PC-9 (cell line): ENCODE measurements at regions of chr5 and their contacts with region 1.

Region 1: GRCh38 chr5:39119404-39120051 is 45.3 kb upstream of the RICTOR start:
- DNase-seq: no peak
- H3K4me3 ChIP-seq: no peak overlapping the region
- H3K27ac ChIP-seq: no peak overlapping the region
- H3K4me1 ChIP-seq: 0 out of 2 replicates have a peak, but pooled peaks cover 16% of the 10 kb centered on the region
- H3K27me3 ChIP-seq: no peaks in the 10 kb centered on the region
- CTCF ChIP-seq: no peak

Region 2: DNA sequence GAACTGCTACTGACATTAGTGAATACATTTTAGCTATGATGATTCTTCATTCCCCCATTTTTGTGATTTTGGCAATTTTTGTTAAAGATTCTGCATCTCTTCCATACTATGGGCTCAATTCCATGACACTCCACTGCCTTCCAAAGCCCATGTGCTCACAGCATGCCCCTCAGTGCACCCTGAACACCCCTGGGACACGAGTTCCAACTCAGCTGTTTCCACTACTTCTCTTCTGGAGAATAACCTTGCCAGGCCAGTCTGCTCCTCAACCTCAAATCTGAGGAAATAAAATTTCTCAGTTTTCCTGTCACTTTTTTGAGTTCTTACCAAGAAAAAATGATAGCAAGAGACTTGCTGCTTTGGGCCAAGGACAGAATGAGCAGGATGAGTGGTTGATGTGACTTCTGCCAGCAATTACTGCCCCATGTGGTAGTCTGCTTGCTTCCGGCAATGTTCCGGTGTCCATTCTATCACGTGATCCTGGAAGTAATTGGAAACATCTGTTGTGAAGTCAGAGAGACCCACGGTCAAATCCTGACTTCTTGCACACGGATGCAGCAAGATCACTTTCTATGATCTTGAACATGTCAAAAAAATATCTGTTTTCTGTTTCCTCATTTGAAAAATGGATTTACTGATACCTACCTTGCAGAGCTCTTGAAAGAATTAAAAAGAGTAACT is 802.8 kb before region 1 on chr5:
- CTCF ChIA-PET with region 1: no interaction called
- POLR2A ChIA-PET with region 1: no interaction called
- intact Hi-C with region 1: no loop called
- DNase-seq: no peak
- H3K4me3 ChIP-seq: no peak overlapping the region
- H3K27ac ChIP-seq: no peak overlapping the region
- H3K4me1 ChIP-seq: no peaks in the 10 kb centered on the region
- H3K27me3 ChIP-seq: peaks cover 27% of the 10 kb centered on the region
- CTCF ChIP-seq: no peak

Region 3: GRCh38 chr5:38899936-38900335 is 219.6 kb before region 1 on chr5:
- CTCF ChIA-PET with region 1: no interaction called
- POLR2A ChIA-PET with region 1: interaction called, 10 read pairs
- intact Hi-C with region 1: no loop called
- DNase-seq: no peak
- H3K4me3 ChIP-seq: no peak overlapping the region
- H3K27ac ChIP-seq: no peak overlapping the region
- H3K4me1 ChIP-seq: no peaks in the 10 kb centered on the region
- H3K27me3 ChIP-seq: no peaks in the 10 kb centered on the region
- CTCF ChIP-seq: no peak

Region 4: DNA sequence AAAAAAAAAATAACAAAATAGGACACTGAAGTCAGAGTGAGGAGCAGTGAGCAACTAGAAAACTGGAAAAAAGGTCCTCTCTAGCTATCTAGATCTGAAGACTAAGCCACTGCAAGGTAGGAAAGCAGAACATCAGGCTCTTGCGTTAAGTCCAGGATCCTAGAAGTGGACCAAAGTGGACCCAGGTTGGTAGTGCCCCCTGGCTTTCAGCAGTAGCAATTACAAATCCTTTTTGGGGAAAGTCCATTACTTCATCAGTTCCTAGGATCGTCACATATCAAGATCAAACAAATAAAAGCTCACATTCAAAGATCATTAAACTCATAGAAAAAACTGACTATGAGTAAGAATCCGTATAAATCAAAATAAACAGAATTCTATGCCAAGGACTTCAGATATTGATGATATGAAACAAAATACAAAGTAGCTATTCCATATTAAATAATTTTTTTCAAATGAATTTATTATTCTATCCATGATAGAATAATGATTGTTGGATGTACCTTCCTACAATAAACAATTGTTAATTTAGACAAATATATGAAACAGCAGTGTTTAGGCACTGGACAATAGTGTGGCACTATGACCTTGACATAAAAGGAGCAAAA is 38.8 kb before region 1 on chr5:
- CTCF ChIA-PET with region 1: interaction called, 13 read pairs
- POLR2A ChIA-PET with region 1: interaction called, 28 read pairs
- intact Hi-C with region 1: no loop called
- DNase-seq: no peak
- H3K4me3 ChIP-seq: no peak overlapping the region
- H3K27ac ChIP-seq: no peak overlapping the region
- H3K4me1 ChIP-seq: peaks cover 21% of the 10 kb centered on the region
- H3K27me3 ChIP-seq: no peaks in the 10 kb centered on the region
- CTCF ChIP-seq: peak; percentile 76

Region 5: GRCh38 chr5:39138892-39139291 is 19.4 kb after region 1 on chr5:
- CTCF ChIA-PET with region 1: no interaction called
- POLR2A ChIA-PET with region 1: no interaction called
- intact Hi-C with region 1: loop called (anchors 2 kb)
- DNase-seq: peak in 1 of 2 experiments; percentile 98
- H3K4me3 ChIP-seq: 0 out of 2 replicates have a peak overlapping the region, but pooled peaks have one; percentile 9
- H3K27ac ChIP-seq: peak overlapping the region; percentile 89
- H3K4me1 ChIP-seq: peaks cover 21% of the 10 kb centered on the region
- H3K27me3 ChIP-seq: no peaks in the 10 kb centered on the region
- CTCF ChIP-seq: no peak

Region 6: DNA sequence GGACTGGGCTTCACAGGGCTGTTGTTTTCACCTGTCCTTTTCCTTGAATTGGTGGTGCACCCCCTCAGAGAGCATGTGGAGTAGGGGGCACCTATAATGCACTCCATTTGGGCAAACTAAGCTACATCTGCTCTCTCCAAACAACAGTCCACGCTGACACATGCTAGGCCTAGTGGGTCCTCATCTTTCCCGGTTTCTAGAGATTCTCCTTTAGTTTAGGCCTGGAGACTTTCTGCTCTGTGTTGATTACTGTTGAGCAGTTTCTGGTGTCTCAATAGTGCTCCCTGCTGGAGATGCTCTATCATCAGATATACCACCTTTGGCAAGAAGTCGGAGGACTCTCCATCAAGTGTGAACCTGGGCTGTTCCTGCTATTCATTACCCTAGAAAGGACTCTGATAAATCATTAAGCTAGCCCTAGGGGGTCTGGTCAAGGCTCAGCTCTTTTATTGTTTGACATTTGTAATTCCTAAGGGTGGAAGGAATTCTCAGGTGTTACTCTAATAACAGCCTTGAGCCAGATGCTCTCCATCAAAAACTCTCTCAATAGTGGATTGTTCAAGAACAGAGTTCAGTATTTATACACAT is 163.8 kb after region 1 on chr5:
- CTCF ChIA-PET with region 1: no interaction called
- POLR2A ChIA-PET with region 1: no interaction called
- intact Hi-C with region 1: no loop called
- DNase-seq: peak; percentile 61 to 64
- H3K4me3 ChIP-seq: no peak overlapping the region
- H3K27ac ChIP-seq: no peak overlapping the region
- H3K4me1 ChIP-seq: no peaks in the 10 kb centered on the region
- H3K27me3 ChIP-seq: no peaks in the 10 kb centered on the region
- CTCF ChIP-seq: peak; percentile 91